ENCODE measurements at regions of chr2 and their contacts with region 1.

Region 1: DNA sequence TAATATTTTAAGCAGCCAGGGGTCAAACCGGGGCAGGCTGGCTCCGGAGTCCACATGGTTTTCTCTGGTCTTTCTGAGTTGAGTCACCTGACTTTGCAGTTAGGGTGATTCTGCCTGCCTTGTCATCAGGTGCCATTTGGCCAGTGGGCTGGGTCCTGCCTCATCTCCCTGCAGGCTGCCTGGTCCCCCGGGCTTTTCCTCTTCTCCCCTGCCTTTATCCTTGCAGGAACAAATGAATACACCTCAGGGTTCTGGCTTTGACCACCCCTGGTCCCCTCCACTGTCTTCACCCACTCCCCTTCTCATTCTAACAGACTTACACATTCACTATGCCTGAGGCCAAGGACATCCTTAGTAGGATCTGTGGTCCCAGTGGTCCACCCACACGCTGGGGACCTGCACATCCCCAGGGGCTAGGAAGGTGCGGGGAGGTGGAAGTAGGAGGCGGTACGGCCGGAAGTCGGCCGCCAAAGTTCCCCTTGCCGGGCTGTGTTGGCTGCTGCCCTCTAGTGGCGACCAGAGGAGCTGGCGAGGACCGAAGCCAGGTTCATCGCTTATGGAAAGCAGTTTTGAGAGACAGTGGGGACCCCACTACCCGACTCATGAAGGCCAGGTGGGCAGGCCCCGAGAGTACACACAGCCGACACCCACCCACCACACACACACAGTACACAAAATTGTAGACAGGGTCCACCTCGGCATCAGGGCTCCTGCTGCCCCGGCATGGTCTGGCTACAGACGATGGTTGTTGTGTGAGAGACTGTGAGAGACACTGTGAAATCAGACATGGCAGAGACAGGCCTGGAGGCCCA is 6.3 kb upstream of the TEX261 start:
- DNase-seq: peak; percentile 87
- ATAC-seq: peak; percentile 97
- H3K4me3 ChIP-seq: peak overlapping the region in 4 of 5 experiments; percentile 31 to 76 (median 40)
- H3K4me3 Mint-ChIP-seq: peak overlapping the region; percentile 69
- H3K27ac ChIP-seq: peak overlapping the region in 1 of 2 donors; percentile 46
- H3K27ac Mint-ChIP-seq: peak overlapping the region; percentile 53
- H3K4me1 ChIP-seq: peaks cover 4 to 11% of the 10 kb centered on the region in 2 donors
- H3K4me1 Mint-ChIP-seq: peaks cover 7% of the 10 kb centered on the region
- H3K27me3 ChIP-seq: no peaks in the 10 kb centered on the region
- H3K27me3 Mint-ChIP-seq: peaks cover 12% of the 10 kb centered on the region
- CTCF ChIP-seq: peak; percentile 94

Region 2: DNA sequence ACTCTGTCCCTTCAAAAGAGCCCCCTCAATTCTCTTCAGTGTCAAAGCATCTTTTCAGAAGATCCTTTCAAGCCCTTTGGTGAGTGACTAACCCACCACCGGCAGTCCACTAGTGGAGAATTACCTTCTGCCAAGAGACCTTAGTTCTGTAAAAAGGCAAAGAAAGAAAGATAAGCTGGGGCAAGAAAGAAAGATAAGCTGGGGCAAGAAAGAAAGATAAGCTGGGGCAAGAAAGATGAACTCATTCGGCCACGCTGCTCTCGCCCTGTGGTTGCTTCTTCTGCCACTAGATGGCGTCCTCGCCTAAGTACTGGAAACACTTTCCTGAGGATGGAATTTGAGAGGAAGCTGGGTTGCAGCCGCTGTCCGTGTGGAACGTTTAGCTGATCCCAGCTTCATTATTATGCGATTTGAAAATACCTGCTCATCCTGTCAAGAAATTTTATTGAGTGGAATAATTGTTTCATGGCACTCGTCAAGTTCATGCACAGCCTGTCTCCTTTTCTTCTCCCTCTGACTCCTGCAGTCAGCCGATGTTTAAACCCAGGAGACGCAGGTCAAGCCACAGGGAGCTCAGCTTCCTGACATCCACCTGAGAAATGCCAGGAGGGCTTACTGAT is 1276.3 kb before region 1 on chr2:
- CTCF ChIA-PET with region 1: no interaction called
- POLR2A ChIA-PET with region 1: no interaction called
- intact Hi-C with region 1: no loop called
- DNase-seq: peak; percentile 86
- ATAC-seq: peak; percentile 74
- H3K4me3 ChIP-seq: peak overlapping the region in 4 of 5 experiments; percentile 27 to 44 (median 31)
- H3K4me3 Mint-ChIP-seq: peak overlapping the region; percentile 64
- H3K27ac ChIP-seq: no peak overlapping the region
- H3K27ac Mint-ChIP-seq: no peak overlapping the region
- H3K4me1 ChIP-seq: peaks cover 3 to 7% of the 10 kb centered on the region in 2 donors
- H3K4me1 Mint-ChIP-seq: peaks cover 7% of the 10 kb centered on the region
- H3K27me3 ChIP-seq: no peaks in the 10 kb centered on the region
- H3K27me3 Mint-ChIP-seq: peaks cover 6% of the 10 kb centered on the region
- CTCF ChIP-seq: peak; percentile 100

Region 3: DNA sequence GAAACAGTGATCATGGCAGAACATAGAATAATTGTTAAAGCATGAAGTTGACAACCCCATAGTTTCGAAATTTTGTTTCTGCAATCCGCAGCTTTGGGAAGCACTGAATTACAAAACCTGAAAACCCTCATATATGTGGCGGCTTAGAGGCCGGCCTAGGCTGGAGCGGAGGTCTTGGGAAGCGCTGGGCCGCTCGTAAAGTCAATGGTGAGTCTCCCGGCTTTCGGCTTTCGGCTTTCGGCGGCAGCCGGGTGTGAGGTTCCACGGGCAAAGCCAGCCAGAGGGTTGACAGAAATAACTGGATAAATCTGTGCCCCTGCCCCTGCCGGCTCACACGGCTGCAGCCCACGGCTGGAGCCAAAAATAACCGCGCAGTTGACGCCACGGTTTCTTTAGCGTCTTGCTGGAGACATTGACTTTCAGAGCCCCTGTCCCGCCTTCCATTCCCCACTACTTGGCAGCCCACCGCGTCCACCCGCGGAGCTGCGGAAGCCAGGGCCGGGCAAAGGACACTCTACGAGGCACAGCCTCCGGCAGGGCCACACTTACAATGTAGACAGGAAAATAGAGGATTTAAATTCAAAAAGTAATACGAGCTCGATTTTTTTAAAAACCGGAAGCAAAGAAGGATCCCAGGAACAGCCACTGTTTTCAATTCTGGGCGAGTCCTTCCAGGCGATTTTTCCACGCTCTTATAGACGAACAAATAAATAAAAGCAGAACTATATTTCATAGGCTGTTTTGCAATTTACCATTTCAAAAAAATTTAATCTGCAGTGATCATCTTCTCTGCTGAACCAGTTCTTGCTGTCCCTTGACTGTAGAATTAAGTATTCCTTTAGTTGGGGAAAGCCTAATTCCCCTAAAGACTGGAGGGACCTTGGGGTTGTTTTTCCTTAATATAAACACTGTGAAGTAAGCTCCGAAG is 93.6 kb before region 1 on chr2:
- CTCF ChIA-PET with region 1: no interaction called
- POLR2A ChIA-PET with region 1: no interaction called
- intact Hi-C with region 1: no loop called
- DNase-seq: peak; percentile 32
- ATAC-seq: no peak
- H3K4me3 ChIP-seq: peak overlapping the region in 3 of 5 experiments; percentile 11 to 58 (median 25)
- H3K4me3 Mint-ChIP-seq: peak overlapping the region; percentile 51
- H3K27ac ChIP-seq: no peak overlapping the region
- H3K27ac Mint-ChIP-seq: no peak overlapping the region
- H3K4me1 ChIP-seq: peaks cover 16 to 19% of the 10 kb centered on the region in 2 donors
- H3K4me1 Mint-ChIP-seq: peaks cover 13% of the 10 kb centered on the region
- H3K27me3 ChIP-seq: peaks cover 0 to 66% (median 57%) of the 10 kb centered on the region in 4 experiments
- H3K27me3 Mint-ChIP-seq: peaks cover 63% of the 10 kb centered on the region
- CTCF ChIP-seq: no peak

Region 4: DNA sequence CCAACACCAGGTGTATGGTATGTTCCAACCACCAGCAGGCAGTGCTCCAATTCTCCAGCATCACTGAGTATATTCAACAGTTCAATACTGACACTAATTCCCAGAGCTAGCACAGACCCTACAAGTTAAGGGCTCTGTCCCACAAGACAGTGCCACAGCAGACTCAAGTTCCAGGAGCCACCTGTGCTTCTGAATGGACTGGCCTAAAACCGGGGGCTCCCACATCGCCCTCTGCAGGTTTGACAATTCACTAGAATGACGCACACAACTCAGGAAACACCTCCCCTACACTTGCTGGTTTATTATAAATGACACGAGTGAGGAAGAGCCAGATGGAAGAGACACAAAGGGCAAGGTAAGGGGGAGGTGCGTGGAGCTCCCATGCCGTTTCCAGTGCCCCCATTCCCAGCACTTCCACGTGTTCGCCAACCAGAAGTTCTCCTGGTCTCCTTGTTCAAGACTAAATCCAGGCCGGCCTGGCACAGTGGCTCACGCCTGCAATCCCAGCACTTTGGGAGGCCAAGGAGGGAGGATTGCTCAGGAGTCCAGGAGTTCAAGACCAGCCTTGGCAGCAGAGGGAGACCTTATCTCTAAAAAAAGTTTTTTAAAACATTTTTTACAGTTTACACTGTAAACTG is 77.5 kb before region 1 on chr2:
- CTCF ChIA-PET with region 1: no interaction called
- POLR2A ChIA-PET with region 1: no interaction called
- intact Hi-C with region 1: no loop called
- DNase-seq: no peak
- ATAC-seq: no peak
- H3K4me3 ChIP-seq: no peak overlapping the region
- H3K4me3 Mint-ChIP-seq: no peak overlapping the region
- H3K27ac ChIP-seq: no peak overlapping the region
- H3K27ac Mint-ChIP-seq: no peak overlapping the region
- H3K4me1 ChIP-seq: no peaks in the 10 kb centered on the region
- H3K4me1 Mint-ChIP-seq: no peaks in the 10 kb centered on the region
- H3K27me3 ChIP-seq: peaks cover 0 to 23% (median 1%) of the 10 kb centered on the region in 4 experiments
- H3K27me3 Mint-ChIP-seq: peaks cover 47% of the 10 kb centered on the region
- CTCF ChIP-seq: no peak

Region 5: GRCh38 chr2:70977605-70978205 is 23.3 kb before region 1 on chr2:
- CTCF ChIA-PET with region 1: interaction called, 16 read pairs
- POLR2A ChIA-PET with region 1: interaction called, 3 read pairs
- intact Hi-C with region 1: loop called (anchors 1 kb)
- DNase-seq: peak; percentile 57
- ATAC-seq: no peak
- H3K4me3 ChIP-seq: peak overlapping the region; percentile 52 to 84 (median 64)
- H3K4me3 Mint-ChIP-seq: peak overlapping the region; percentile 95
- H3K27ac ChIP-seq: peak overlapping the region; percentile 43 to 79
- H3K27ac Mint-ChIP-seq: peak overlapping the region; percentile 93
- H3K4me1 ChIP-seq: peaks cover 16 to 22% of the 10 kb centered on the region in 2 donors
- H3K4me1 Mint-ChIP-seq: peaks cover 22% of the 10 kb centered on the region
- H3K27me3 ChIP-seq: no peaks in the 10 kb centered on the region
- H3K27me3 Mint-ChIP-seq: peaks cover 15% of the 10 kb centered on the region
- CTCF ChIP-seq: no peak

Region 6: DNA sequence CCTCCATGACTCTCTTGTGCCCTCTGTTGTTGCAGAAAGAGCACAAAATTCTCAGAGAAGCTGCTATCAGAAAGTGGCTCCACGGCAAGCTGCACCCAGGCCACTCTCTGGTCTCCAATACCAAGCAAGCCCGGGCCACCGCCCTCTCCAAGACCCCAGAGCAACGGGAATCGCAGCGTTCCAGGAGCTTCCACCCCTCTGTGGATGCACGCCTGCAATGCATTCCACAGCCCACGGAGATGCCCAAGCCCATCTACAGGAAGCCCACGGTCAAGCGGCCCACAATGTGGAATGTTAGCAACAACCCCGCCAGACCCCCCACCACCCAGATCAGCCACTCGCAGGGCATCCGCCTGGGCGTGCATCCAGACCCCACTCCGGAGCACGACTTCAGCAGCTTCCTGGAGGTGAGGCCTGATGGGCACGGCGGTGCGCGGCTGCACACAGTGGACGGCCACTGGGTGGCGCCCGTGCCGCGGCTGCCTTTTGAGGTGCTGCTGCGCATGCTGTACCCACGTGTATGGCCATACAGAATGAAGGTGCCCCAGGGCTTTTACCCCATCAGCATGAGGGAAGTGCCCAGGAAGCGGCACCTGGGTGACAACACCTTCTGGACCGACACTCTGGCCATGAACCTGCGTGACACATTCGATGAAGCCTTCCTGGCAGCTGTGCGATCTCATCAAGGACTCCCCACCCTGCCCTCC is 16.3 kb before region 1 on chr2:
- CTCF ChIA-PET with region 1: interaction called, 21 read pairs
- POLR2A ChIA-PET with region 1: no interaction called
- intact Hi-C with region 1: no loop called
- DNase-seq: peak; percentile 82
- ATAC-seq: peak; percentile 93
- H3K4me3 ChIP-seq: peak overlapping the region in 2 of 5 experiments; percentile 13 to 17
- H3K4me3 Mint-ChIP-seq: peak overlapping the region; percentile 19
- H3K27ac ChIP-seq: no peak overlapping the region
- H3K27ac Mint-ChIP-seq: no peak overlapping the region
- H3K4me1 ChIP-seq: peaks cover 7 to 8% of the 10 kb centered on the region in 2 donors
- H3K4me1 Mint-ChIP-seq: peaks cover 10% of the 10 kb centered on the region
- H3K27me3 ChIP-seq: no peaks in the 10 kb centered on the region
- H3K27me3 Mint-ChIP-seq: no peaks in the 10 kb centered on the region
- CTCF ChIP-seq: peak; percentile 77